Activated CD4-positive, alpha-beta T cell treated with anti-CD3 and anti-CD28 coated beads for 36 hours (primary cell): ENCODE measurements at regions of chr1 and their contacts with region 1.

Region 1: GRCh38 chr1:193406901-193407300 is 220.5 kb upstream of the B3GALT2 start:
- DNase-seq: no peak
- ATAC-seq: no peak
- H3K4me3 Mint-ChIP-seq: no peak overlapping the region
- H3K27ac Mint-ChIP-seq: no peak overlapping the region
- H3K4me1 Mint-ChIP-seq: peaks cover 24% of the 10 kb centered on the region
- H3K27me3 Mint-ChIP-seq: no peaks in the 10 kb centered on the region

Region 2: GRCh38 chr1:193183019-193183627 is 223.8 kb before region 1 on chr1:
- CTCF ChIA-PET with region 1: interaction called, 3 read pairs
- POLR2A ChIA-PET with region 1: no interaction called
- intact Hi-C with region 1: loop called in 1 of 2 experiments (anchors 5 kb)
- DNase-seq: no peak
- ATAC-seq: peak; percentile 47
- H3K4me3 Mint-ChIP-seq: no peak overlapping the region
- H3K27ac Mint-ChIP-seq: no peak overlapping the region
- H3K4me1 Mint-ChIP-seq: peaks cover 34% of the 10 kb centered on the region
- H3K27me3 Mint-ChIP-seq: no peaks in the 10 kb centered on the region

Region 3: DNA sequence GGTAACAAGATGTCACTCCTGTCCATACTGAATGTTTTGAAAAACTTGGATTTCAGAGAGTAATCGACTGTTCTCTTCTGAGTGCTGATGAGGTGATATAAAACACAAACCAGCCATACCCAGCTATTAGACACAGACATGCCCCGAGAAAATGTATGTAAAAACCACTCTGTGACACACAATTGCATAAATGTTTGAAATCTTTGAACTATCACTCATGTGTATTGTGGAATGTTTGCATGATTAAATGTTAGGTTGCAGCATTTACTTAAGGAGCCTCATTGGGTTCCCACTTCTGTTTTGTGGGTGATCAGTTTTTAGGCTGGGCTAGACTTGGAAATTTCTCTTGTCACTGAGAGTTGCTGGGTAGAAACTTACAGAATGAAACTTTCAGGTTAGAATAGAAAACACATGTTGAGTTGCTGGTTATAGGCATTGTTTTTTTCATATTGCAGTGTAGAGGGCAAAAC is 49.9 kb after region 1 on chr1:
- CTCF ChIA-PET with region 1: no interaction called
- POLR2A ChIA-PET with region 1: no interaction called
- intact Hi-C with region 1: loop called in 1 of 2 experiments (anchors 5 kb)
- DNase-seq: no peak
- ATAC-seq: no peak
- H3K4me3 Mint-ChIP-seq: no peak overlapping the region
- H3K27ac Mint-ChIP-seq: no peak overlapping the region
- H3K4me1 Mint-ChIP-seq: peaks cover 21% of the 10 kb centered on the region
- H3K27me3 Mint-ChIP-seq: no peaks in the 10 kb centered on the region

Region 4: DNA sequence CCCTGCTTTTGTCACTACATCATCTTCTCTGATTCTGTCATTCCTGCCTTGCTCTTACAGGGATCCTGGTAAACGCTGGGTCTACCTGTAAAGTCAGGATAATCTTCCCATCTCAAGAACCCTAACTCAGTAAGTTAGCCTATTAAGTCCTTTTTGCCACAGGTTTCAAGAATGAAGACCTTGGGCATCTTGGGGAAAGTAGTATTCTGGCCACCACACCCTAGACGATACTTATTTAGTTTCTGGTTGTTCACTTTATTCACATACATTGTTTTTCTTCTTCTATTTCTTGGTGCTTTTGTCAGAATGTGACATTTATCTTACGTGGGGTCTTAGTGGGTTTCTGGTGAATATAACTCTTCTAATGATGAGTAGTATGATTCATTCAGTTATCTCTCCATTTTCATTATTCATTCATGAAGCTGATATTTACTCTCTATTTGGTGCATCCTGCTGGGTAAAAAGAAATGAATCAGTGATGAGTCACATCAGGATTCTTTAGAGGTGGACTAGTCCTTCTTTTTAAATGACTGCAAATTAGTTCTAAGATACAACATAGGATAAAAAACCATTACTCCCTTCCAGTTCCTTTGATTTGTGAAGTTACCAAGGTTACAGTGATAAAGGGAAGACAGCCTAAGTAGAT is 293.9 kb after region 1 on chr1:
- CTCF ChIA-PET with region 1: no interaction called
- POLR2A ChIA-PET with region 1: no interaction called
- intact Hi-C with region 1: loop called in 1 of 2 experiments (anchors 2 kb)
- DNase-seq: no peak
- ATAC-seq: peak; percentile 91
- H3K4me3 Mint-ChIP-seq: no peak overlapping the region
- H3K27ac Mint-ChIP-seq: no peak overlapping the region
- H3K4me1 Mint-ChIP-seq: peaks cover 15% of the 10 kb centered on the region
- H3K27me3 Mint-ChIP-seq: no peaks in the 10 kb centered on the region

Region 5: DNA sequence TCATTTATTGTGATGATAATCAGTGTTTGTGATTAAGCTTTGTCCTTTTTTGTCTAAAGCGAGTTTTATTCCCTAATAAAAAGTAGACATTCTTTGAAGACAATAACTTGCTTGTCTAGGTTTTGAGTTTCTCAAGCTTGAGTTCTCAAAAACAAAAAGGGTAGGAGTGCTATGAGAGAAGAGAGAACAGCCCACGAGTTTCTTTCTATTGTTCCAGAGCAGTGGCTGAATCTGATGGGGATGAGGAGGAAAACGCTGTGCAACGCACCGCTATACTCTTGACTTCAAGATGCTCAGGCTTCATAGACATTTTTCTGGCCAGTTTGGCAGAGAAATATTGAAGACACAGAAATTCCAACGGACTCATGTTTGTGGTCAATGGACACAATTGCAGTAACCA is 449.4 kb after region 1 on chr1:
- CTCF ChIA-PET with region 1: no interaction called
- POLR2A ChIA-PET with region 1: no interaction called
- intact Hi-C with region 1: loop called in 1 of 2 experiments (anchors 5 kb)
- DNase-seq: no peak
- ATAC-seq: no peak
- H3K4me3 Mint-ChIP-seq: no peak overlapping the region
- H3K27ac Mint-ChIP-seq: no peak overlapping the region
- H3K4me1 Mint-ChIP-seq: peaks cover 2% of the 10 kb centered on the region
- H3K27me3 Mint-ChIP-seq: no peaks in the 10 kb centered on the region